ENCODE measurements at regions of chr10 and their contacts with region 1.

Region 1: GRCh38 chr10:121069061-121069850 is 218.1 kb downstream of the WDR11 start:
- DNase-seq: no peak
- ATAC-seq: no peak
- H3K4me3 Mint-ChIP-seq: no peak overlapping the region
- H3K27ac Mint-ChIP-seq: no peak overlapping the region
- H3K4me1 Mint-ChIP-seq: 0 out of 2 replicates have a peak, but pooled peaks cover 3% of the 10 kb centered on the region
- H3K27me3 Mint-ChIP-seq: no peaks in the 10 kb centered on the region
- CTCF ChIP-seq: no peak

Region 2: DNA sequence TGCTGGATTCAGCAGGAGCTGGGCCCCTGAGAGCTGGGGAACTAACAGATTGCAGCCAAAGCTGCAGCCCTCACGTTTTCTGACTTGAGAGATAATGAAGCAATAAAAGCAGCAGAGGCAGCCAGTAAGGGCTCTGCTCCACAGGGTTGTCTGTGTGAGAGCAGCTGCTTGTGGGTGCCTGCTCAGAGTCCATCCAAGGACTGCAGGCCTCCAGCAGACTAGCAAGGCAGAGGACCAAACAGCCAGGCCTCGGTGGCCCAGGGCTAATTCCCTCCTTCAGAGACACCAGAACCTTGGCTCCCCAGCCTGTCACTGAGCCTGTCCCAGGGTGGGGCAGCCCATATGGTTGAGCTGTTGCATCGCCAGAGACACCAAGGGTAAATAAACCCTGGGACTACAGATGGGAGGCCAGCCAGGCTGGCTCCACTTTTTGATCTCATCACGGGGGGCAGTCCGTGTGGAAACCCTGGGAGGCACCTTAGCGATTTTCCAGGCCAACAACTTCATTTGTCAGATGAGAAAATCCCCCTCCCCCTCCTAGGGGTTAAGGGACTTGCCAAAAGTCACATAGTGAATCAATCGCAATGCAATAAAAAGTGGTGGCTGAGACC is 11.1 kb after region 1 on chr10:
- CTCF ChIA-PET with region 1: interaction called, 13 read pairs
- POLR2A ChIA-PET with region 1: no interaction called
- DNase-seq: no peak
- ATAC-seq: no peak
- H3K4me3 Mint-ChIP-seq: no peak overlapping the region
- H3K27ac Mint-ChIP-seq: no peak overlapping the region
- H3K4me1 Mint-ChIP-seq: peaks cover 30% of the 10 kb centered on the region
- H3K27me3 Mint-ChIP-seq: no peaks in the 10 kb centered on the region
- CTCF ChIP-seq: no peak

Region 3: GRCh38 chr10:121154846-121155245 is 85.6 kb after region 1 on chr10:
- CTCF ChIA-PET with region 1: no interaction called
- POLR2A ChIA-PET with region 1: no interaction called
- DNase-seq: no peak
- ATAC-seq: no peak
- H3K4me3 Mint-ChIP-seq: no peak overlapping the region
- H3K27ac Mint-ChIP-seq: no peak overlapping the region
- H3K4me1 Mint-ChIP-seq: peaks cover 10% of the 10 kb centered on the region; the same call in 1 of the 2 replicates
- H3K27me3 Mint-ChIP-seq: no peaks in the 10 kb centered on the region; the same call in 1 of the 2 replicates
- CTCF ChIP-seq: no peak